ENCODE measurements at regions of chr5 and their contacts with region 1.

Region 1: DNA sequence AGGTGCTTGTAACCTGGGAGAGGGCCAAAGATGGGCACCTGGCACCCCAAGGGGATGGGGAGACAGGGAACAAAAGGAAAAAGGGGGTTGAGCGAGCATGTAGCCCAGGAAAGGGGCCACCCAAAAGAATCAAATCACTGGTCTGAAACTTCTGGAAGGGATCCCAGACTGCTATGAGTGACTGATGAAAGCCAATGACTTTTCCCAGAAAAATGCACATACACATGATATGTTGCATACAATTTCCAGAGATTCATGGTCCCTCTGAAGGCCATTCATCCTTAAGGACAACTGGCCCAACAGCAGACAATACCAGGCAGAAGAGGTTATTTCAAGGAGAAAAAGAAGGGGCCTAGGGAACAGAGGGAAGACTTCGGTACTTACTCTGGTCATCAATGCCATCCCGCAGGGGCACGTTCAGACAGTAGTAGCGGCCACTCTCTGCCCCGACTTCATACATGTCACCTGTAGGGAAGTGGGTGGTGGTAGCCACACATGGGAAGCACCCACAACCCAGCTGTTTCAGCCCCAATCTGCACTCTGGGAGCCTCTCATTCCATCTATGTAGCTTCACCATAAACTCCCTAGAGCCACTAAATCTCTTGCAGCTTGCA is 8.4 kb downstream of the HDAC3 start:
- DNase-seq: no peak
- H3K4me3 ChIP-seq: no peak overlapping the region
- H3K27ac ChIP-seq: no peak overlapping the region
- H3K4me1 ChIP-seq: peaks cover 0 to 4% (median 2%) of the 10 kb centered on the region in 4 experiments; a peak in 1 of 7 replicates
- H3K27me3 ChIP-seq: no peaks in the 10 kb centered on the region
- CTCF ChIP-seq: no peak
- EP300 ChIP-seq: no peak
- POLR2A ChIP-seq: no peak
- RAD21 ChIP-seq: no peak

Region 2: DNA sequence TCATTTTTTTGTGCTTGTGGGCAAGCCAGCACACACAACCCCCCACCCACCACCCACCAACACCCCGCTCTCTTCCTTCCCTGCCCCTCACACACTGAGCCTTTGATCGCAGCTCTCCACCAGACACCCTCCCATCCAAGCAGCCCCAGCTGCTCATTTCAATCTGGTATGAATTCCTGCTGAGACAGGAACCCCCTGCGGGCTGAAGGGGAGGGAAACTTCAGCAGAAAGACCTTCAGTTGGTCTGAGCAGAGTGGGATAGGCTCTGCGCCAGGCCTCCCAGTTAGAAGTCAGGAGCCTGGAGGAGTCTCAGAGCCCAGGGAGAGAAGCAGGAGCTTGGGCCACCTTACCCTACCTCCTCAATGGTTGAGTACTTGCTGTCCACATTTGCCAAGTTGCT is 132.2 kb before region 1 on chr5:
- CTCF ChIA-PET with region 1: no interaction called
- POLR2A ChIA-PET with region 1: no interaction called
- DNase-seq: no peak
- H3K4me3 ChIP-seq: peak overlapping the region in 1 of 4 experiments; percentile 41; a peak in 1 of 8 replicates
- H3K27ac ChIP-seq: no peak overlapping the region
- H3K4me1 ChIP-seq: peaks cover 6 to 37% (median 25%) of the 10 kb centered on the region in 4 experiments
- H3K27me3 ChIP-seq: peaks cover 11 to 32% (median 28%) of the 10 kb centered on the region in 4 experiments; a peak in 6 of 7 replicates
- CTCF ChIP-seq: no peak
- EP300 ChIP-seq: no peak
- POLR2A ChIP-seq: no peak
- RAD21 ChIP-seq: no peak

Region 3: DNA sequence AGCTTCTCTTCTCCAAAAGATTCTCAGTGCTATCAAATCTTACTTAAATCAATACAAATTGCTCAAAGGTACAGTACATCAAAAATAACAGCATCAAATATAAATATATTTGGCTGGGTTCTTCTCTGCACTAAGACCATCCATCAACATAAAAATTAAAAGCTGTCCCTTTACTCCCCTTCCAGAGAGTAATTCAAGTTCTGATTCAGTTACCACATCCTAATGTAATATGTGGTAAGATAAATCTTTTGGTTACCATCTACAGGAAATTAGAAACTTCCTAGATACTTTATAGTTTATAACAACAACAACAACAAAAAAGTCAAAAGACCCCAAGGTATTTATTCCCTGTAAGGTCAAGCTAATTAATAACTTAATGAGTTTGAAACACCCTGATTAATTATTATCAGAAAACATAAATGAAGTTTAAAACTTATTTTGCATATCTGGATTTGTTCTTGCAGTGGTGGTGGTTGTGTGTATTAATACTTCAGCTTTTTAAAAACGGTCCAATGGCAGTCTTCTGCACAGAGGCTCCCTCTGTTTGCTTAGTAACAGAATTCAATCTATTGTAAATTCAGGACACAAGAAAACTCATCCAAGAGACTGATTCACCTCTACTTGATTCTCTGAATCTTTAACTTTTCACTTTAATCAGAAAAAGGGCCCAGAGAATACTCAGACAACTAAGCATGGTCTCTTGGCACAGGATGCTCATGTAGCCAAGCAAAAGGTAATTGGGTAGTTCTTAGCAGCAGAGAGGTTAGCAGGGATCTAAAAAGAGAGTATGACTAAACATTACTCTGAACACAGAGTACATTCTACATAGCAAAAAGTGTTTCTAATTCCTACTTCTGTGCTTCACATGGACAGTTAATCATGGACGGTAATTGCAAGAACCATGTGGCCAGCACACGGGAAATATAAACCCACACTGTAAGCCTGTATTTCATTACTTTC is 29.6 kb before region 1 on chr5:
- CTCF ChIA-PET with region 1: interaction called, 150 read pairs
- POLR2A ChIA-PET with region 1: interaction called, 4 read pairs
- DNase-seq: no peak
- H3K4me3 ChIP-seq: no peak overlapping the region
- H3K27ac ChIP-seq: no peak overlapping the region
- H3K4me1 ChIP-seq: no peaks in the 10 kb centered on the region; a peak in 1 of 7 replicates
- H3K27me3 ChIP-seq: no peaks in the 10 kb centered on the region
- CTCF ChIP-seq: no peak
- EP300 ChIP-seq: no peak
- POLR2A ChIP-seq: no peak
- RAD21 ChIP-seq: no peak